Activated naive CD4-positive, alpha-beta T cell treated with anti-CD3 and anti-CD28 coated beads for 36 hours (primary cell): ENCODE measurements at regions of chr4 and their contacts with region 1.

Region 1: DNA sequence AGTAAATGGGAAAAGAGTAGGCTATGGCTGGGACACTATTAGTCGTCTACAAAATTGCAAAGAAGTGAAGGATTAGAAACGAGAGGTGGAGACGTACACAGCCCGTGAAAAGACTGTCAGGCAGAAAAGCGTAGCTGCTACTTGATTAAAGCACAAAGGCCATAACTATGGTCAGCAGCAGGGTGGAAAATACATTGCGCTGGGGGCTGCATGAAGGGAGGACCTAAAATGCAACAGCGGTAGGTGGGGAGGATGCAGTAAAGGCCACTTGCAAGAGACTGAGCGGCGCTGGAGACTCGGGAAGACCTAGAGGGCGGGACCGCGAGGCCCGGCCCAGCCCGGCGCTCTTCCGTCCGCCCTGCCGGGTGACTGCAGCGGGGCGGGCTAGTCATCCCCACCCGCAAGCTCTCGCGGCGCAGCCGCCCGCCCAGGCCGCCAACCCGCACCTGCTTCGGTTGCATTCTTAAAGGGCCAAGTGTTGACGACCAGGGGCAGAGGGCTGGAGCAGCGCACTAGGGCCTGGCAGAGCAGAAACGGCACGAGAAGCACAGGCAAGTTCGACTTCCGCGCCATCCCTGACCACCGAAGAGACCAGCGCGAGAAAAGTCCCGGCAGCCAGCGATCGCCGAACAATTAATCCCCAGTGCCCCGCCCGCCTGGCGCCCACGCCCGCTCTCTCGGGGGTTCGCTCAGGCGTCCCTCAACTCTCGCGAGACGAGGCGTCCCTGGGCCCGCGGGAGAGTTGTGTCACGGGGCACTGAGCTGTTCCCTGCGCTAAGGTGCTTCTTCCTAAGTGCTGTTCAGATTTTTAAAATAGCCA is at the start of gene AGA:
- DNase-seq: peak; percentile 98
- H3K4me3 Mint-ChIP-seq: peak within 1 kb of the TSS; percentile 93
- H3K27ac Mint-ChIP-seq: peak within 1 kb of the TSS; percentile 96
- H3K4me1 Mint-ChIP-seq: peaks cover 25% of the 10 kb centered on the region
- H3K27me3 Mint-ChIP-seq: no peaks in the 10 kb centered on the region
- total RNA-seq, gene AGA: 14.4 to 18.0 TPM

Region 2: DNA sequence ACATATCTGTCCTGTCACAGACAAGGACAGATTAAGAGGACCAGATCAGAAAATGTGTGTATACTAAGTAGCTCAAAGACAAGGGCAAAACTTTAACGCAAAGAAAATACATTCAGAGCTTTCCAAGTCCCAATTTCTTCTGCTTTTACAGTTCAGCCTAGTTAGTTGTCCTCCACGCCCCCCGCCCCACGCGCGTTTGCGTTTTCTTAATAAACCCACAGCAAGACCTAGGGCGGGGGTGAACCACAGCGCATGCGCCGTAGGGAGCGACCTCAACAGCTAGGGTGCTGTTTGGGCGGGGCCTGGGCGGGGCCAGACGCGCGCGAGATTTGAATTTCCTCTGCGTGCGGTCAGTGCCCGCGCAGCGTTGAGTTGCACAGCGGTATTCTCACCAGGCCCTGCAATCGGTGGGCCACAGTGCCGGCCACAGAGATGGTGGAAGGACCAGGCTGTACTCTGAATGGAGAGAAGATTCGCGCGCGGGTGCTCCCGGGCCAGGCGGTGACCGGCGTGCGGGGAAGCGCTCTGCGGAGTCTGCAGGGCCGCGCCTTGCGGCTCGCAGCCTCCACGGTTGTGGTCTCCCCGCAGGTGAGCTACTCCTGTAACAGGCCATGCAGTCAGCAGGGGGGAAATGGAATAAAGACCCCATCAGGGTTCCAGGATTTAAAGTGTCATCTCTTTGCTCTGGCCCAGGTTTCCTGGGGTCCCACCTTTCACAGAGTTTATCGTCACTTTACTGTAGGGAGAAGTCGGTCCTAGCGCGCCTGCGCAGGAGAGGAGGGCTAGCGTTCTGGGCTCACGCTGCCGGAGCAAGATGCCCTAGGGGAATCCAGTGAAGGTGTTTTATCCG is 132.3 kb before region 1 on chr4 and contains the start of gene NEIL3:
- CTCF ChIA-PET with region 1: no interaction called
- intact Hi-C with region 1: loop called (anchors 1 kb)
- DNase-seq: peak; percentile 98
- H3K4me3 Mint-ChIP-seq: peak within 1 kb of the TSS; percentile 91
- H3K27ac Mint-ChIP-seq: peak within 1 kb of the TSS; percentile 88
- H3K4me1 Mint-ChIP-seq: peaks cover 21% of the 10 kb centered on the region
- H3K27me3 Mint-ChIP-seq: no peaks in the 10 kb centered on the region
- total RNA-seq, gene NEIL3: 21.9 to 22.7 TPM

Region 3: GRCh38 chr4:177401658-177402273 is 40.2 kb before region 1 on chr4:
- CTCF ChIA-PET with region 1: no interaction called
- intact Hi-C with region 1: loop called (anchors 1 kb)
- DNase-seq: no peak
- H3K4me3 Mint-ChIP-seq: no peak overlapping the region
- H3K27ac Mint-ChIP-seq: no peak overlapping the region
- H3K4me1 Mint-ChIP-seq: peaks cover 48% of the 10 kb centered on the region
- H3K27me3 Mint-ChIP-seq: peaks cover 3% of the 10 kb centered on the region

Region 4: GRCh38 chr4:177419434-177419833 is 22.6 kb before region 1 on chr4:
- CTCF ChIA-PET with region 1: no interaction called
- intact Hi-C with region 1: no loop called
- DNase-seq: no peak
- H3K4me3 Mint-ChIP-seq: no peak overlapping the region
- H3K27ac Mint-ChIP-seq: no peak overlapping the region
- H3K4me1 Mint-ChIP-seq: no peaks in the 10 kb centered on the region
- H3K27me3 Mint-ChIP-seq: no peaks in the 10 kb centered on the region

Region 5: GRCh38 chr4:177546745-177547144 is 104.7 kb after region 1 on chr4:
- CTCF ChIA-PET with region 1: no interaction called
- intact Hi-C with region 1: loop called (anchors 5 kb)
- DNase-seq: no peak
- H3K4me3 Mint-ChIP-seq: no peak overlapping the region
- H3K27ac Mint-ChIP-seq: no peak overlapping the region
- H3K4me1 Mint-ChIP-seq: no peaks in the 10 kb centered on the region
- H3K27me3 Mint-ChIP-seq: no peaks in the 10 kb centered on the region